ENCODE measurements at regions of chr1 and their contacts with region 1.

Region 1: GRCh38 chr1:242225776-242226573 is 227.1 kb upstream of the MAP1LC3C start:
- DNase-seq: peak; percentile 100
- ATAC-seq: peak; percentile 91
- H3K4me3 ChIP-seq: peak overlapping the region; percentile 36
- H3K27ac ChIP-seq: peak overlapping the region; percentile 95
- H3K4me1 ChIP-seq: peaks cover 48% of the 10 kb centered on the region
- H3K27me3 ChIP-seq: no peaks in the 10 kb centered on the region
- CTCF ChIP-seq: no peak

Region 2: DNA sequence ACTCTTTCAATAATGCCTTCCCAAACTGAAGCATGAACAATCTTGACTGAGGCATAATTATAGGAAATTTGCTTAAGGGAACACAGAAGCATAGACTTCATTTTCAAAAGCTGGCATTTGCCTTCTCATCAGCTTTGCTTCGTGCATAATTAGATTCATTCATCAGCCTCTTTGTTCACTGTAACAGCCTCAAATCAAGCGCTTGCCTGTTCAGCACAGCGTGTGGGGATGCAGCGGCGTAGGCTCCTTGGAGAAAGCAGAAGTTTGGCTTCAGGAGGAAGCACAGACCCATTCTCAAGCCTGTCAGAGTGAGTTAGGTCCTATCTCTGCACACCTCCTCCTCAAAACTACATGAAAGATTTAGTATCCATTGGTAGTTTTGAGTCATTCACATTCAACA is 19.3 kb after region 1 on chr1:
- CTCF ChIA-PET with region 1: no interaction called
- POLR2A ChIA-PET with region 1: no interaction called
- intact Hi-C with region 1: loop called (anchors 1 kb)
- DNase-seq: no peak
- ATAC-seq: no peak
- H3K4me3 ChIP-seq: no peak overlapping the region
- H3K27ac ChIP-seq: no peak overlapping the region
- H3K4me1 ChIP-seq: no peaks in the 10 kb centered on the region
- H3K27me3 ChIP-seq: 0 out of 2 replicates have a peak, but pooled peaks cover 3% of the 10 kb centered on the region
- CTCF ChIP-seq: no peak

Region 3: GRCh38 chr1:242318140-242318539 is 92.2 kb after region 1 on chr1:
- CTCF ChIA-PET with region 1: no interaction called
- POLR2A ChIA-PET with region 1: no interaction called
- intact Hi-C with region 1: loop called (anchors 5 kb)
- DNase-seq: no peak
- ATAC-seq: peak; percentile 62
- H3K4me3 ChIP-seq: no peak overlapping the region
- H3K27ac ChIP-seq: no peak overlapping the region
- H3K4me1 ChIP-seq: peaks cover 3% of the 10 kb centered on the region; the same call in 1 of the 2 replicates
- H3K27me3 ChIP-seq: no peaks in the 10 kb centered on the region
- CTCF ChIP-seq: no peak